ENCODE measurements at regions of chr6 and their contacts with region 1.

Region 1: GRCh38 chr6:150004783-150005717 is 20.3 kb downstream of the RAET1L start:
- DNase-seq: peak; percentile 83 to 91 (median 85)
- H3K4me3 ChIP-seq: peak overlapping the region; percentile 50 to 93
- H3K4me3 Mint-ChIP-seq: peak overlapping the region; percentile 92 to 98 (median 95)
- H3K27ac ChIP-seq: peak overlapping the region; percentile 73
- H3K27ac Mint-ChIP-seq: peak overlapping the region; percentile 86 to 98 (median 96)
- H3K4me1 ChIP-seq: peaks cover 36% of the 10 kb centered on the region
- H3K4me1 Mint-ChIP-seq: peaks cover 15 to 52% (median 35%) of the 10 kb centered on the region in 4 donors
- H3K27me3 ChIP-seq: no peaks in the 10 kb centered on the region
- H3K27me3 Mint-ChIP-seq: peaks cover 10 to 15% of the 10 kb centered on the region in 2 donors

Region 2: GRCh38 chr6:148885136-148885870 is 1119.7 kb before region 1 on chr6:
- CTCF ChIA-PET with region 1: no interaction called
- POLR2A ChIA-PET with region 1: no interaction called
- intact Hi-C with region 1: no loop called
- DNase-seq: no peak
- H3K4me3 ChIP-seq: no peak overlapping the region
- H3K4me3 Mint-ChIP-seq: no peak overlapping the region
- H3K27ac ChIP-seq: no peak overlapping the region
- H3K27ac Mint-ChIP-seq: no peak overlapping the region
- H3K4me1 ChIP-seq: no peaks in the 10 kb centered on the region
- H3K4me1 Mint-ChIP-seq: peaks cover 0 to 7% (median 4%) of the 10 kb centered on the region in 4 donors
- H3K27me3 ChIP-seq: no peaks in the 10 kb centered on the region
- H3K27me3 Mint-ChIP-seq: no peaks in the 10 kb centered on the region

Region 3: DNA sequence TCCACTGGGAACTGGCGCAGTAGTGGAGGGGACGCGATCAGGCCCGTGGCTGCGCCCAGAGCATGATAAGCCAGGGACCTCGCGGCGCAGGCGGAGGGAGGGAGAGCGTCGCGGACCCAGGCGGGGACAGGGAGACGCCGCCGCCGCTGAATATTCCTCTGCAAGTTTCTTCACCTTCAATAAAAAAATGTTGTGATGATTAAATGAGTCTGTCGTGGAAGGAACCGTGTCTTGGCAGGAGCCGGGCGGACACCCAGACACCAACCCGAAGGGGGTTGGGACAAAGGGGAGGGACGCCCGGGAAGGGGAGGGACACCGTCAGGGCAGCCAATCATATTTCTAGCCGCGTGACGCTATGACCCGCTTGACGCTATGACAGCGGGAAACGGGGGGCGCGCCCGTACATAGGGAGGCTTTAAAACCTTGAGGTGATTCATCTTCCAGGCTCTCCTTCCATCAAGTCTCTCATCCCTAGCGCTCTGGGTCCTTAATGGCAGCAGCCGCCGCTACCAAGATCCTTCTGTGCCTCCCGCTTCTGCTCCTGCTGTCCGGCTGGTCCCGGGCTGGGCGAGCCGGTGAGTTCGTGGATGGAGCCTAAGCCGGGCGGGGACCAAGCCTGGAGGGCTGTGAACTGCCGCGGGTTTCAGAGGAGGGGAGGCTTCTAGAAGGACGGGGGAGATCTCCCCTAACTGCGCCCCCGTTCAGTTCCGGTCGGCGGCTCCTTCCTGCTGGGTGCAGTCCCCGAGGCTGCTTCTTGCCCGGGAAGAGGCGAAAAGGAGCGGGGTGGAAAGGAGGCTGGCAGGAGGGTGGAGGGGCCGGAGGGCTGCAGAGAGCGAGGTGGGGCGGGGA is 63.2 kb before region 1 on chr6 and contains the start of gene ULBP2:
- CTCF ChIA-PET with region 1: interaction called, 4 read pairs
- POLR2A ChIA-PET with region 1: no interaction called
- intact Hi-C with region 1: loop called (anchors 2 kb)
- DNase-seq: peak; percentile 86 to 97 (median 88)
- H3K4me3 ChIP-seq: peak within 1 kb of the TSS; percentile 57 to 76
- H3K4me3 Mint-ChIP-seq: peak within 1 kb of the TSS; percentile 93 to 96 (median 95)
- H3K27ac ChIP-seq: peak within 1 kb of the TSS; percentile 18
- H3K27ac Mint-ChIP-seq: peak within 1 kb of the TSS; percentile 93 to 96 (median 94)
- H3K4me1 ChIP-seq: peaks cover 25% of the 10 kb centered on the region
- H3K4me1 Mint-ChIP-seq: peaks cover 13 to 50% (median 29%) of the 10 kb centered on the region in 4 donors
- H3K27me3 ChIP-seq: peaks cover 35% of the 10 kb centered on the region
- H3K27me3 Mint-ChIP-seq: peaks cover 38% of the 10 kb centered on the region in 2 donors
- total RNA-seq, gene ULBP2: not detected

Region 4: DNA sequence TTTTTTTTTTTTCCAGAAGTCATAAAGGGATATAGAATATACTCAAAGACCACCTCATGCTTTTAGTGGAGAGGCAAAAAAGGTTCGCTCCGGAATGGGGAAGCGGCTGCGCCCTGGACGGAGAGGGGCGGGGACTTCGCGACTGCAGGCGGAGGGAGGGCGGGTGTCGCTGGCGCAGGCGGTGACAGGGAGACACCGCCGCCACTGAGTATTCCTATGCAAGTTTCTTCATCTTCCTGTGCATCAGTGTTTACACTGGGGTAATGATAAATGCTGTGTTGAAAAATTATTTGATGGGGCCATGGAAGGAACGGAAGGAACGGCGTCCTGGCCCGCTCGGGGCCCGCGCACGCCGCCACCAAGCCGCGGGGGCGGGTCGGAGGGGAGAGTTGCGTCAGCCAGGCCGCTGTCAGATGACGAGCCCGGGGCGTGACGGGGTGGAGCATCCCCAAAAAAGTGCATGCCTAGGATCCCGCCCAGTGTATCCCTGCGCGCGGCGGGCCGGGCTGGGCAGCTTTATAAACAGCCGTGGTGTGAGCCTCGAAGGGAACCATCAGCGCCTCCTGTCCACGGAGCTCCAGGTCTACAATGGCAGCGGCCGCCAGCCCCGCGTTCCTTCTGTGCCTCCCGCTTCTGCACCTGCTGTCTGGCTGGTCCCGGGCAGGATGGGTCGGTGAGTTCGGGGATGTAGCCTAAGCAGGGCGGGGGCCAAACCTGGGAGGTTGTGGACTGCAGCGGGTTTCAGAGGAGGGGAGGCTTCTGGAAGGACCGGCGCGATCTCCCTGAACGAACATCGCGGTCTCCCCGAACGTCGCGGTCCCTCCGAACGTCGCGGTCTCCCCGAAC is 41.4 kb before region 1 on chr6 and contains the start of gene ULBP1:
- CTCF ChIA-PET with region 1: no interaction called
- POLR2A ChIA-PET with region 1: no interaction called
- intact Hi-C with region 1: loop called (anchors 1 kb)
- DNase-seq: peak; percentile 64 to 74 (median 72)
- H3K4me3 ChIP-seq: peak within 1 kb of the TSS; percentile 39 to 65
- H3K4me3 Mint-ChIP-seq: peak within 1 kb of the TSS; percentile 88 to 98 (median 93)
- H3K27ac ChIP-seq: no peak within 1 kb of the TSS
- H3K27ac Mint-ChIP-seq: peak within 1 kb of the TSS; percentile 78 to 92 (median 82)
- H3K4me1 ChIP-seq: peaks cover 30% of the 10 kb centered on the region
- H3K4me1 Mint-ChIP-seq: peaks cover 14 to 36% (median 23%) of the 10 kb centered on the region in 4 donors
- H3K27me3 ChIP-seq: peaks cover 44% of the 10 kb centered on the region
- H3K27me3 Mint-ChIP-seq: peaks cover 47 to 86% of the 10 kb centered on the region in 2 donors
- total RNA-seq, gene ULBP1: not detected

Region 5: GRCh38 chr6:149990618-149991471 is 14.2 kb before region 1 on chr6:
- CTCF ChIA-PET with region 1: interaction called, 5 read pairs
- POLR2A ChIA-PET with region 1: interaction called, 3 read pairs
- intact Hi-C with region 1: loop called (anchors 1 kb)
- DNase-seq: peak in 4 of 5 donors; percentile 33 to 53 (median 42)
- H3K4me3 ChIP-seq: peak overlapping the region; percentile 38 to 40
- H3K4me3 Mint-ChIP-seq: peak overlapping the region; percentile 63 to 93 (median 80)
- H3K27ac ChIP-seq: no peak overlapping the region
- H3K27ac Mint-ChIP-seq: peak overlapping the region in 4 of 7 donors; percentile 18 to 58 (median 34)
- H3K4me1 ChIP-seq: peaks cover 28% of the 10 kb centered on the region
- H3K4me1 Mint-ChIP-seq: peaks cover 22 to 42% (median 29%) of the 10 kb centered on the region in 4 donors
- H3K27me3 ChIP-seq: peaks cover 75% of the 10 kb centered on the region
- H3K27me3 Mint-ChIP-seq: peaks cover 69 to 78% of the 10 kb centered on the region in 2 donors

Region 6: DNA sequence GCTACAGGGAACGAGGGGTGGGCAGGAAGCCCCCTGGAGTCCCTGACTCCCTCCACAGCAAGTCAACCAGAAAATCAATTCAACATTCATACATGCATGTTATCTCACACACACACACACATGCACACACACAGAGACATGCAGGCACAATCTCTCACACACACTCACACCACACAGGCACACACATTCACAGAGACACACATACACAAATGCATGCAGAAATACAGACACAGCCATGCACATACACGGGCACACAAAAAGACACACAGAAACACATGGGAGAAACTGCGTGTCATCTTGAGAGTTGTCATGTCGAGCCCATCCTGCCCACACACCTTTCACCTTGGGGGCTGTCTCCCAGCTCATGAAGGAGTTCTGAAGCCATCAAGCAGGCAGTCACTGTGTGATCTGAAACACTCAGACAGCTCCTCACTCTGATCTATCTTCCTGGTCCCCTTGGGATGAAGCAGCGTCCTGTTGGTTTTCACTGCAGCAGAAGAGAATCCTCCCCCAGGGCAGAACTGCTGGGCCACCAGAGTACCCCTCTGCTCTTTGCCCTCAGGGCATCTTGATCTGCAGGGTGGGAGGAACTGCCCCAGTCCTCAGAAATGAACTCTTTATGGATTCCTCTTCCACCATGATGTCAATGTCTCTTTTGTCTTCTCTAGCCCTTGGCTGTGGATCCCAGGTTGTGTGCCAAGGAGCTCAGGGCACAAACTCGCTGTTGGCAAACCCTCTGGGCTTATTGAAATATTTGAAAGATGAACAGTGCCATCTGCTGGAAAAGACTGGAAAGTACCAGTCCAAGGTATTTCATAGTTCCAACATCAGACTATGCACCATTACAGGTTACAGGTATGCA is 11.5 kb after region 1 on chr6:
- CTCF ChIA-PET with region 1: interaction called, 14 read pairs
- POLR2A ChIA-PET with region 1: interaction called, 3 read pairs
- intact Hi-C with region 1: no loop called
- DNase-seq: peak; percentile 60 to 79 (median 72)
- H3K4me3 ChIP-seq: no peak overlapping the region
- H3K4me3 Mint-ChIP-seq: peak overlapping the region in 2 of 8 donors; percentile 13 to 26
- H3K27ac ChIP-seq: no peak overlapping the region
- H3K27ac Mint-ChIP-seq: peak overlapping the region in 3 of 7 donors; percentile 32 to 50 (median 47)
- H3K4me1 ChIP-seq: peaks cover 8% of the 10 kb centered on the region
- H3K4me1 Mint-ChIP-seq: peaks cover 8 to 28% (median 12%) of the 10 kb centered on the region in 4 donors
- H3K27me3 ChIP-seq: peaks cover 19% of the 10 kb centered on the region
- H3K27me3 Mint-ChIP-seq: peaks cover 52 to 66% of the 10 kb centered on the region in 2 donors

Region 7: GRCh38 chr6:150068720-150069648 is 63.9 kb after region 1 on chr6 and contains the start of gene ULBP3:
- CTCF ChIA-PET with region 1: interaction called, 4 read pairs
- POLR2A ChIA-PET with region 1: no interaction called
- intact Hi-C with region 1: loop called (anchors 2 kb)
- DNase-seq: peak; percentile 37 to 64 (median 52)
- H3K4me3 ChIP-seq: peak within 1 kb of the TSS; percentile 65 to 79
- H3K4me3 Mint-ChIP-seq: peak within 1 kb of the TSS; percentile 82 to 93 (median 90)
- H3K27ac ChIP-seq: peak within 1 kb of the TSS; percentile 22
- H3K27ac Mint-ChIP-seq: peak within 1 kb of the TSS; percentile 23 to 74 (median 61)
- H3K4me1 ChIP-seq: peaks cover 18% of the 10 kb centered on the region
- H3K4me1 Mint-ChIP-seq: peaks cover 8 to 30% (median 18%) of the 10 kb centered on the region in 4 donors
- H3K27me3 ChIP-seq: no peaks in the 10 kb centered on the region
- H3K27me3 Mint-ChIP-seq: peaks cover 0 to 5% of the 10 kb centered on the region in 2 donors
- total RNA-seq, gene ULBP3: 0.42 TPM in 1 of 2 experiments, not detected in the other

Region 8: DNA sequence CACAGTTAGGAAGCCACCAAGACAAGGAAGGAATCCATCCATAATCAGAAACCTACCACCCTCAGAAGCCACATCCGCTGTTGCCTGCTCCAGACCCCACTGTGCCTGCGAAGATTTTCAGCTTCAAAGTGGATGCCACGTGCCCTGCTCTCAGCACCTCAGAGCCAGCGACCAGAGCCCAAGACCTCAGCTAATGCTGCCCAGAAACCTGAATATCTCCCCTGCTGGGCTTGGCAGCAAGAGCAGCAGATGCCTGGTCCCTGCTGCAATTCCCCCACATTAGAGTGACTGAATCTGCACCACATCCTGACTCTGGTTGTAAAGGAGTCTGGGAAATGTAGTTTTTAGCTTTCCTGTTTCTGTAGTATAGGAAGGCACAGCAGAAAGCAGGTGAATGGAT is 74.6 kb after region 1 on chr6:
- CTCF ChIA-PET with region 1: no interaction called
- POLR2A ChIA-PET with region 1: no interaction called
- intact Hi-C with region 1: no loop called
- DNase-seq: peak; percentile 55 to 67 (median 58)
- H3K4me3 ChIP-seq: no peak overlapping the region
- H3K4me3 Mint-ChIP-seq: peak overlapping the region; percentile 14 to 81 (median 68)
- H3K27ac ChIP-seq: no peak overlapping the region
- H3K27ac Mint-ChIP-seq: peak overlapping the region in 6 of 7 donors; percentile 25 to 86 (median 69)
- H3K4me1 ChIP-seq: peaks cover 23% of the 10 kb centered on the region
- H3K4me1 Mint-ChIP-seq: peaks cover 14 to 26% (median 23%) of the 10 kb centered on the region in 4 donors
- H3K27me3 ChIP-seq: no peaks in the 10 kb centered on the region
- H3K27me3 Mint-ChIP-seq: peaks cover 10 to 22% of the 10 kb centered on the region in 2 donors

Region 9: DNA sequence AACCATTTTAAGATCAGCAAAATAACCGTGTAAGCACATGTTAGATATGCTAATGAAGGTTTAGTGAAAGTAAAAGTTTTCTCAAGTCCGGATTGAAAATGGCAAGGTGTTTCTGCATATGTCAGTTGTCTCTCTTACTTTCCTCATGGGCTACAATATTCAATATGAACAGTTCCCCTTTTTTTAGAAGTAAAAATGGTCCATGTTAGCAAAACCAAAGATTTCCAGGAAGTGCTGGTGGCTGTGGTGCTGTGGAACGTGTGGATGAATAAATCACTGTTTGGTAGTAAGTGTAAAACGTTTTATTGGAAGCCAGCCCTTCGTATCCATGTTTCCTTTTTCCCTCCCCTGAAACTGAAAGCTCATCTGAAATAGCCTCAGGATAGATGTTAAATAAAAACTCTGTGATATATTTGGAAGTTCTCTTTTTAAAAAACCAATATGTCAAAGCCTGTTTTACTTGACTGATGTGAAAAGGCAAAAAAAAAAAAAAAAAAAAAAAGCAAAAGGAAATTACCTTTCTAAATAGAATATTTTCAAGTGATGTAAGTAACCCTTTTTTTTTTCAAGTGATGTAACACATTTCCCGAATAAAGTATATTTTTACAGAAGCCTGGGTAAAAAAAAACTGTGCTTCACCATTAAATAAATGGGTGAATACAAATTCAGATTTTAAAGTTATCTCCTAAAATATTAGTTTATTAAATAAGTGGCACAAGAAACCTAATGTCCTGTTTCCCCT is 636.5 kb after region 1 on chr6:
- CTCF ChIA-PET with region 1: no interaction called
- POLR2A ChIA-PET with region 1: no interaction called
- intact Hi-C with region 1: no loop called
- DNase-seq: no peak
- H3K4me3 ChIP-seq: no peak overlapping the region
- H3K4me3 Mint-ChIP-seq: peak overlapping the region; percentile 31 to 83 (median 74)
- H3K27ac ChIP-seq: no peak overlapping the region
- H3K27ac Mint-ChIP-seq: peak overlapping the region in 4 of 7 donors; percentile 27 to 75 (median 59)
- H3K4me1 ChIP-seq: peaks cover 4% of the 10 kb centered on the region
- H3K4me1 Mint-ChIP-seq: peaks cover 6 to 18% (median 9%) of the 10 kb centered on the region in 4 donors
- H3K27me3 ChIP-seq: no peaks in the 10 kb centered on the region
- H3K27me3 Mint-ChIP-seq: peaks cover 0 to 1% of the 10 kb centered on the region in 2 donors